Sciatic nerve (tissue), 2 donors: ENCODE measurements at regions of chr2 and their contacts with region 1.

Region 1: GRCh38 chr2:45643543-45644542 is 7.6 kb upstream of the PRKCE start:
- DNase-seq: peak; percentile 82
- ATAC-seq: peak; percentile 95

Region 2: GRCh38 chr2:45778720-45779171 is 134.9 kb after region 1 on chr2:
- intact Hi-C with region 1: loop called (anchors 10 kb)
- DNase-seq: peak; percentile 76
- ATAC-seq: peak; percentile 57